ENCODE measurements at regions of chr10 and their contacts with region 1.

Region 1: DNA sequence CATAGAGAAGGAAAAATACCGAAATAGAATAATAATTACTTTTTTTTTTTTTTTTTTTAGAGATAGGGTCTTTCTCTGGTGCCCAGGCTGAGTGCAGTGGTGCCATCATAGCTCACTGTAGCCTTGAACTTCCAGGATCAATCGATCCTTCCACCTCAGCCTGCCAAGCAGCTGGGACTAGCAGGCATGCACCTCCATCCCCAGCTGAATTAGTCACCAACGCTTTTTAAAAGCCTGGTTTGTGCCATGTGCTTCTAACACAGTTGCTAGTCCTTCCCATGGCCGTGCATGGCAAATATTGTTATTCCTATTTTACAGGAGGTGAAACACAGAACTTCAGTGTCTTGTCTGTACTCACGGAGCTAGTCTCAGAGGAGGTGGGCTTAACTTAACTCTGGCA is 23.2 kb downstream of the LYZL2 start:
- DNase-seq: peak; percentile 35
- H3K4me3 Mint-ChIP-seq: no peak overlapping the region
- H3K27ac Mint-ChIP-seq: peak overlapping the region; percentile 73
- H3K4me1 Mint-ChIP-seq: peaks cover 22% of the 10 kb centered on the region
- H3K27me3 Mint-ChIP-seq: no peaks in the 10 kb centered on the region
- CTCF ChIP-seq: no peak

Region 2: DNA sequence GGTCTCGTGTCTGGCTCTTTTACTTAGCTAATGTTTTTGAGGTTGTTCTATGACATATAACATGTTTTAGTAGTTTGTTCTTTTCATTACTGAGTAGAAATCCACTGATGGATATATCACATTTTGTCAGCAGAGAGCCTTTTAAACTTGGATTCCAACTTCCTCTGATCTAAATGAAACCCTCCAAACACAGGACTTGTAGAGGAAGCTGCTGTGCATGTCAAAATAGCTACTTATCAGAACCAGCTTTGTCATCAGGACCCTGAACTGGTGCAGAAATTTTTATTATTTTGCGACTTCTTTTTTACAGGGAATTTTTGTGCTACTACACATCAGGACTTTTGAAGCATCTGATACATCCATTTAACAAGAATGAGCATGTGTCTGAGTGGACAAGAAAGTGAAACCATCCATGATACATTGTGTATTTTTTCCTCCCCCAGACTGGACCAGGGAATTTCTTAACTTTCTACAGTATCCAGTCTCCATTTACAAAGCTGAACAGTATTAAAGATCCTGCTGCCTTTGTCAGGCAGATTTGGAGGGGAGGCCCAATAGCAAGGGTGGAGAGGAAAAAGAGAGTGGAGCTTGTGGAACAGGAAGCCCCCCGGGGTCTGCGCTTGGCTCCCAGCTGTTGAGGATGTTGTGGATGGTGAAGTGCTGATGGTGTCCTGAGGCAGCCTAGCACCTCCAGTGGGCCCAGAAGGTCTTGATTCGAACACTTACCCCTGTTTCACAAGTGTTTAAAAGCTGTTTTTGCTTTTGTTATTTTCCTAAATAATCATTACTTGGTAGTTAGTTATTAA is 227.9 kb before region 1 on chr10:
- CTCF ChIA-PET with region 1: interaction called, 11 read pairs
- intact Hi-C with region 1: no loop called
- DNase-seq: no peak
- H3K4me3 Mint-ChIP-seq: no peak overlapping the region
- H3K27ac Mint-ChIP-seq: no peak overlapping the region
- H3K4me1 Mint-ChIP-seq: no peaks in the 10 kb centered on the region
- H3K27me3 Mint-ChIP-seq: peaks cover 17% of the 10 kb centered on the region
- CTCF ChIP-seq: no peak